Natural killer cell (primary cell): ENCODE measurements at regions of chr2 and their contacts with region 1.

Region 1: GRCh38 chr2:134218930-134219658 is 34.8 kb upstream of the MGAT5 start:
- DNase-seq: peak in 1 of 2 donors; percentile 71
- ATAC-seq: peak; percentile 19 to 60 (median 47)
- H3K4me3 ChIP-seq: no peak overlapping the region
- H3K4me3 Mint-ChIP-seq: peak overlapping the region; percentile 75
- H3K27ac ChIP-seq: peak overlapping the region; percentile 45
- H3K27ac Mint-ChIP-seq: peak overlapping the region in 1 of 2 donors; percentile 87
- H3K4me1 ChIP-seq: peaks cover 42% of the 10 kb centered on the region
- H3K4me1 Mint-ChIP-seq: peaks cover 54 to 61% of the 10 kb centered on the region in 2 donors
- H3K27me3 ChIP-seq: no peaks in the 10 kb centered on the region
- H3K27me3 Mint-ChIP-seq: no peaks in the 10 kb centered on the region
- CTCF ChIP-seq: no peak

Region 2: GRCh38 chr2:133791191-133791590 is 427.9 kb before region 1 on chr2:
- intact Hi-C with region 1: no loop called
- DNase-seq: no peak
- ATAC-seq: no peak
- H3K4me3 ChIP-seq: no peak overlapping the region
- H3K4me3 Mint-ChIP-seq: no peak overlapping the region
- H3K27ac ChIP-seq: no peak overlapping the region
- H3K27ac Mint-ChIP-seq: no peak overlapping the region
- H3K4me1 ChIP-seq: no peaks in the 10 kb centered on the region
- H3K4me1 Mint-ChIP-seq: no peaks in the 10 kb centered on the region
- H3K27me3 ChIP-seq: no peaks in the 10 kb centered on the region
- H3K27me3 Mint-ChIP-seq: no peaks in the 10 kb centered on the region
- CTCF ChIP-seq: no peak

Region 3: DNA sequence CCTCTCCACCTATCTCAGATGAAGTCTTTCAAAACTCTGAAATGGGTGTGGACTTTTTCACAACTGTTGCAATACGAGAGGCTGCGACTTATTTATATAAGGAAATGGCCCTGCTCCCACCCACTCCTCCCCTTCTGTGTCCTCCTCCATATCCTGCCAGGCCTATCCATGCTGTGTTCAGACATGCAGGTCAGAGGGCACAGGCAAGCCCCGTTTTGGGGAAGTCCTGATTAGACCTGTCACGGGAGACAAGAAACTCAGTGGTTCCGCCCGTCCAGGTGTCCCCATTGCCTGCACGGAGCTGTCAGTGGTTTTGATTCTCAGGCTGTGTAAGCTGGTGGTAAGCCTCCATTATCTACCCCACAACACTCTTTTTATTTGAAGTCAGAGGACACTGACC is 64.8 kb before region 1 on chr2:
- intact Hi-C with region 1: no loop called
- DNase-seq: no peak
- ATAC-seq: peak in 1 of 3 donors; percentile 39
- H3K4me3 ChIP-seq: no peak overlapping the region
- H3K4me3 Mint-ChIP-seq: no peak overlapping the region
- H3K27ac ChIP-seq: no peak overlapping the region
- H3K27ac Mint-ChIP-seq: peak overlapping the region in 1 of 2 donors; percentile 54
- H3K4me1 ChIP-seq: peaks cover 12% of the 10 kb centered on the region
- H3K4me1 Mint-ChIP-seq: peaks cover 55 to 56% of the 10 kb centered on the region in 2 donors
- H3K27me3 ChIP-seq: no peaks in the 10 kb centered on the region
- H3K27me3 Mint-ChIP-seq: no peaks in the 10 kb centered on the region
- CTCF ChIP-seq: no peak

Region 4: GRCh38 chr2:134253804-134254203 is 34.7 kb after region 1 on chr2 and contains the start of gene MGAT5:
- intact Hi-C with region 1: loop called (anchors 5 kb)
- DNase-seq: no peak
- ATAC-seq: no peak
- H3K4me3 ChIP-seq: peak within 1 kb of the TSS; percentile 0
- H3K4me3 Mint-ChIP-seq: no peak within 1 kb of the TSS
- H3K27ac ChIP-seq: peak within 1 kb of the TSS; percentile 50
- H3K27ac Mint-ChIP-seq: no peak within 1 kb of the TSS
- H3K4me1 ChIP-seq: peaks cover 51% of the 10 kb centered on the region
- H3K4me1 Mint-ChIP-seq: peaks cover 47 to 65% of the 10 kb centered on the region in 2 donors
- H3K27me3 ChIP-seq: no peaks in the 10 kb centered on the region
- H3K27me3 Mint-ChIP-seq: peaks cover 7 to 15% of the 10 kb centered on the region in 2 donors
- CTCF ChIP-seq: no peak
- total RNA-seq, gene MGAT5: 39.7 to 58.2 (median 57.0) TPM